PC-9 (cell line): ENCODE measurements at regions of chr6 and their contacts with region 1.

Region 1: DNA sequence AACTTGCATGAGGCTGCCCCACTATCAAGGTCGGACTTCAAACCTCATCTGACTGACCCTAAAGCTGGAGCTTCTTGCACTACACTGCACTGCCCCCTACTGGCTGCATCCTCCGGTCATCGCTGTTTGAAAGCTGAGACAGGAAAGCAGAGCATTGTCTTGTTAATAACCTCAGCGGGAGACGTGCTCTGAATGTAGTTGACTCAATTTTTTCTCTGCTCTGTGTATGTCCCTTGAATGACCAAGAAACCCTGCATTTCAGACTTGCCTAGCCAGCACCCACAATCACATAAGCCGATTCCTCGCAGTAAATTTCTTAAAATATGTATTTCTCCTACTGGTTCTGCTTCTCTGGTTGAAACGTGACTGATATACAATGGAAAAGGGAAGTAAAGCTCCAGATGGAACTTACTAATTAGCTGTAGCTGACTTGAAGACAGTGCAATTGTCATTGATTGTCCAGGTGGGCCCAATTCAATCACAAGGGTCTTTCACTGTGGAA is 27.8 kb downstream of the TCF21 start:
- DNase-seq: peak; percentile 71 to 82
- H3K4me3 ChIP-seq: peak overlapping the region; percentile 6; the same call in 1 of the 2 replicates
- H3K27ac ChIP-seq: no peak overlapping the region
- H3K4me1 ChIP-seq: no peaks in the 10 kb centered on the region
- H3K27me3 ChIP-seq: no peaks in the 10 kb centered on the region
- CTCF ChIP-seq: peak; percentile 100

Region 2: GRCh38 chr6:133741375-133741861 is 175.3 kb before region 1 on chr6:
- CTCF ChIA-PET with region 1: no interaction called
- POLR2A ChIA-PET with region 1: no interaction called
- intact Hi-C with region 1: loop called (anchors 10 kb)
- DNase-seq: peak; percentile 29 to 89
- H3K4me3 ChIP-seq: no peak overlapping the region; the same call in 1 of the 2 replicates
- H3K27ac ChIP-seq: peak overlapping the region; percentile 63
- H3K4me1 ChIP-seq: peaks cover 41% of the 10 kb centered on the region
- H3K27me3 ChIP-seq: no peaks in the 10 kb centered on the region
- CTCF ChIP-seq: no peak; the same call in 1 of the 2 replicates

Region 3: DNA sequence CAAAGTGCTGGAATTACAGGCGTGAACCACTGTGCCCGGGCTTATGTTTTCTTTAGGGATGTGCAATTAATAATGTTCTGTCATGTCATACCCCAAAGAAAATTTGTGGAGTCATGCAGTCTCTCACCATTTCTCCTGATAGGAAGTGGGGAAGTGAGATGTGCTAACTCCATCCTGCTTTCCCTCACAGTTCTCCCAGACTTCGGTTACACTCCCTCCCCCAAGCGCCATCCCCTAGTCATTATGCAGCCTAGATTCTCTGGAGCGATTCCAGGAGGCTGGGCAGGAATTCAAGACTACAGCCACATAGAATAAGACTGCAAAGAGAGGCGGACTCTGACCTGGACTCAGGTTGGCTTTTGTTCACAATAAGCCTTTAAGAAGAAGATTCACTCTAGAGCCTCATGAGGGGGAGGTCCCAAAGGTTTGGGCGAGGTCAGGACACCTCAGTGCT is 761.8 kb after region 1 on chr6:
- CTCF ChIA-PET with region 1: no interaction called
- POLR2A ChIA-PET with region 1: no interaction called
- intact Hi-C with region 1: no loop called
- DNase-seq: no peak
- H3K4me3 ChIP-seq: no peak overlapping the region
- H3K27ac ChIP-seq: no peak overlapping the region
- H3K4me1 ChIP-seq: peaks cover 4% of the 10 kb centered on the region; the same call in 1 of the 2 replicates
- H3K27me3 ChIP-seq: no peaks in the 10 kb centered on the region
- CTCF ChIP-seq: no peak